WTC11 (cell line): ENCODE measurements at regions of chr10 and their contacts with region 1.

Region 1: GRCh38 chr10:122565728-122566206 is 5.2 kb downstream of the DMBT1 start:
- DNase-seq: peak; percentile 82
- ATAC-seq: peak; percentile 71
- H3K4me3 Mint-ChIP-seq: no peak overlapping the region
- H3K27ac Mint-ChIP-seq: no peak overlapping the region
- H3K4me1 Mint-ChIP-seq: peaks cover 9% of the 10 kb centered on the region
- H3K27me3 Mint-ChIP-seq: peaks cover 5% of the 10 kb centered on the region; the same call in 1 of the 2 replicates
- CTCF ChIP-seq: peak; percentile 75

Region 2: GRCh38 chr10:122495406-122496340 is 70.1 kb before region 1 on chr10:
- CTCF ChIA-PET with region 1: interaction called, 10 read pairs
- POLR2A ChIA-PET with region 1: no interaction called
- DNase-seq: peak; percentile 30
- ATAC-seq: peak; percentile 33; the same call in 1 of the 2 replicates
- H3K4me3 Mint-ChIP-seq: no peak overlapping the region
- H3K27ac Mint-ChIP-seq: no peak overlapping the region
- H3K4me1 Mint-ChIP-seq: peaks cover 10% of the 10 kb centered on the region
- H3K27me3 Mint-ChIP-seq: no peaks in the 10 kb centered on the region
- CTCF ChIP-seq: no peak

Region 3: GRCh38 chr10:122525788-122526187 is 40.0 kb before region 1 on chr10:
- CTCF ChIA-PET with region 1: interaction called, 17 read pairs
- POLR2A ChIA-PET with region 1: no interaction called
- DNase-seq: no peak
- ATAC-seq: peak; percentile 36; the same call in 1 of the 2 replicates
- H3K4me3 Mint-ChIP-seq: no peak overlapping the region
- H3K27ac Mint-ChIP-seq: no peak overlapping the region
- H3K4me1 Mint-ChIP-seq: no peaks in the 10 kb centered on the region
- H3K27me3 Mint-ChIP-seq: no peaks in the 10 kb centered on the region; the same call in 1 of the 2 replicates
- CTCF ChIP-seq: 0 out of 2 replicates have a peak, but pooled peaks have one; percentile 27